ENCODE measurements at regions of chr2 and their contacts with region 1.

Region 1: GRCh38 chr2:227248876-227249275 is 76.2 kb upstream of the MFF start:
- DNase-seq: no peak
- ATAC-seq: no peak
- H3K4me3 ChIP-seq: no peak overlapping the region
- H3K4me3 Mint-ChIP-seq: no peak overlapping the region
- H3K27ac ChIP-seq: no peak overlapping the region
- H3K27ac Mint-ChIP-seq: no peak overlapping the region
- H3K4me1 ChIP-seq: no peaks in the 10 kb centered on the region
- H3K4me1 Mint-ChIP-seq: no peaks in the 10 kb centered on the region
- H3K27me3 ChIP-seq: no peaks in the 10 kb centered on the region
- H3K27me3 Mint-ChIP-seq: no peaks in the 10 kb centered on the region
- CTCF ChIP-seq: no peak

Region 2: DNA sequence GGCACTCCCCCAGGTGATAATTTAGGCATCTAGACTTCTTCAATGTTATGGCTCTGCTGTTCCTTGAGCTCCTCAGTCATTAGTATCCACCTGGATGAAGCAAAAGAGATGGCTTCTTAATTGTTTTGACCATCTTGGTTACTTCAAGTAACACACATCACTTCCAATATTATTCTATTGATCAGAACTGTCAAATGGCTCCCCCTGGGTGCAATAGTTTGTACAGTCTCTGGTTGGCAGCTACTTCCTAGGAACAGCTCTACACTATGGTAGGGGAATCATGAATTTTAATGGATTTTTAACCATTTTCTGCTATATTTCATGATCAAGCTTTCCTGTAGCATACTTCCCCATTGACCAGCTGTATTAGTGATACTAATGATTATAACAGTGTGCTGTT is 1692.4 kb before region 1 on chr2:
- CTCF ChIA-PET with region 1: no interaction called
- POLR2A ChIA-PET with region 1: no interaction called
- intact Hi-C with region 1: loop called in 1 of 2 experiments (anchors 10 kb)
- DNase-seq: no peak
- ATAC-seq: no peak
- H3K4me3 ChIP-seq: no peak overlapping the region
- H3K4me3 Mint-ChIP-seq: no peak overlapping the region
- H3K27ac ChIP-seq: no peak overlapping the region
- H3K27ac Mint-ChIP-seq: no peak overlapping the region
- H3K4me1 ChIP-seq: no peaks in the 10 kb centered on the region
- H3K4me1 Mint-ChIP-seq: no peaks in the 10 kb centered on the region
- H3K27me3 ChIP-seq: no peaks in the 10 kb centered on the region
- H3K27me3 Mint-ChIP-seq: peaks cover 38% of the 10 kb centered on the region
- CTCF ChIP-seq: no peak

Region 3: DNA sequence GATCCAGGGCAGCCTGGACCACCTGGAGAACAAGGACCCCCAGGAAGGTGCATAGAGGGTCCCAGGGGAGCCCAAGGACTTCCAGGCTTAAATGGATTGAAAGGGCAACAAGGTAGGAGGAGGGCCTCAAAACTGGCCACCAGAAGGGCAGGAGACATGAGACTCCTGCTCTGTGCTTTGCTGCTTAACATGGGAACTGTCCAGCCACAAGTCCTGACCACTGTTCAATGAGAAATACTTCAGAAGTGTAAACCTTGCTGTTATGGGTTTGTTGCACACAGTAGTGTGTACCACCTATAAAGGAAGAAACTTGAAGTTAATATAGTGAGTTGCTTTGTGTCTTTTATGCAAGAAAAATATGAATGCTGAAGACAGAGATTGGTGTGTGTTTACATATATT is 32.0 kb after region 1 on chr2:
- CTCF ChIA-PET with region 1: no interaction called
- POLR2A ChIA-PET with region 1: no interaction called
- intact Hi-C with region 1: no loop called
- DNase-seq: no peak
- ATAC-seq: no peak
- H3K4me3 ChIP-seq: no peak overlapping the region
- H3K4me3 Mint-ChIP-seq: no peak overlapping the region
- H3K27ac ChIP-seq: no peak overlapping the region
- H3K27ac Mint-ChIP-seq: no peak overlapping the region
- H3K4me1 ChIP-seq: no peaks in the 10 kb centered on the region
- H3K4me1 Mint-ChIP-seq: no peaks in the 10 kb centered on the region
- H3K27me3 ChIP-seq: no peaks in the 10 kb centered on the region
- H3K27me3 Mint-ChIP-seq: no peaks in the 10 kb centered on the region
- CTCF ChIP-seq: no peak

Measured in CD4-positive, alpha-beta T cell (primary cell).